Motor neuron (in vitro differentiated cells): ENCODE measurements at regions of chr2 and their contacts with region 1.

Region 1: GRCh38 chr2:133193544-133194361 is 374.5 kb downstream of the NCKAP5 start:
- ATAC-seq: peak in 7 of 8 experiments; percentile 34 to 94 (median 45)
- H3K4me3 ChIP-seq: no peak overlapping the region
- H3K27ac ChIP-seq: no peak overlapping the region
- H3K4me1 ChIP-seq: no peaks in the 10 kb centered on the region

Region 2: DNA sequence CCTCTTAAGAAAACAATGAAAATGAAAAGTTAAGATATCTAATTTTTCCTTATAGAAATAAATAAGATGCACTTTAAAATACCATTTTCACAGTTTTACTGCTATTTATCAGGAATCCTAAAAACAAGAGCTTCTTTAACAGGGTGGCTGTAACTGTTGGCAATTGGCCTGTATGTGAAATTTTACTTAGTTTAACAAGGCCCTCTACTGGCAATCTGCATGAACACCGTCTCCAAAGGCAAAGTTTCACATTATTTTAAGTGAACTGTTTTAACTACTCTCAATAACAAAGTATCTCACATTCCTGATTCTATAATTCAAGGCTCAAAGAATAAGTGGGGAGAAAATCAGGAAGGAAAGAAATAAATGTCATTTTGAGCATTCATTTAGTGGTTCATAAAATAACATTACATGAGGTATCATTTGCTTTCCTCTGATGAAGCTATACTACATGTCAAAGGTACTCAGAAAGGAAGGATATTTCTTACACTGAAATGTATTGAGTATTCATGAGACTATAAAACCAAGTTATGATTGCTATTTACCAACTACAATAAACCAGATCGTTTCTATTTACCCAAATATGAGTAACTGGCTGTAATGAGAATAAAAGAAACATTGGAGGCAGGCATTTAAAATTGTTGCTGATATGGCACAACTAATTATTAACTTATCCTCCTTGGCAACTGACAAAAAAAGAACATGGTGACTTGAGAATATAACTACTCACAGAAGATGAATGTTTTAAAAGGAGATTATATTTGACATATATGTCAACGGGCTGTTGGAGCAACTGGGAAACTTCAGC is 367.5 kb after region 1 on chr2:
- in situ Hi-C with region 1: loop called in 1 of 9 experiments (anchors 25 kb)
- ATAC-seq: peak in 6 of 8 experiments; percentile 28 to 63 (median 54)
- H3K4me3 ChIP-seq: no peak overlapping the region
- H3K27ac ChIP-seq: no peak overlapping the region
- H3K4me1 ChIP-seq: peaks cover 9 to 16% of the 10 kb centered on the region in 2 donors